Mammary epithelial cell (primary cell): ENCODE measurements at regions of chr5 and their contacts with region 1.

Region 1: GRCh38 chr5:130109152-130109551 is 204.9 kb downstream of the CHSY3 start:
- DNase-seq: peak; percentile 30
- H3K4me3 ChIP-seq: no peak overlapping the region
- H3K27ac ChIP-seq: no peak overlapping the region
- H3K4me1 ChIP-seq: no peaks in the 10 kb centered on the region
- H3K27me3 ChIP-seq: no peaks in the 10 kb centered on the region
- CTCF ChIP-seq: peak; percentile 48 to 70

Region 2: GRCh38 chr5:130141659-130142320 is 32.6 kb after region 1 on chr5:
- CTCF ChIA-PET with region 1: no interaction called
- dilution Hi-C with region 1: no loop called
- in situ Hi-C with region 1: no loop called
- intact Hi-C with region 1: loop called (anchors 1 kb)
- DNase-seq: peak; percentile 60
- H3K4me3 ChIP-seq: no peak overlapping the region
- H3K27ac ChIP-seq: no peak overlapping the region
- H3K4me1 ChIP-seq: peaks cover 6% of the 10 kb centered on the region
- H3K27me3 ChIP-seq: no peaks in the 10 kb centered on the region
- CTCF ChIP-seq: peak; percentile 67 to 87

Region 3: DNA sequence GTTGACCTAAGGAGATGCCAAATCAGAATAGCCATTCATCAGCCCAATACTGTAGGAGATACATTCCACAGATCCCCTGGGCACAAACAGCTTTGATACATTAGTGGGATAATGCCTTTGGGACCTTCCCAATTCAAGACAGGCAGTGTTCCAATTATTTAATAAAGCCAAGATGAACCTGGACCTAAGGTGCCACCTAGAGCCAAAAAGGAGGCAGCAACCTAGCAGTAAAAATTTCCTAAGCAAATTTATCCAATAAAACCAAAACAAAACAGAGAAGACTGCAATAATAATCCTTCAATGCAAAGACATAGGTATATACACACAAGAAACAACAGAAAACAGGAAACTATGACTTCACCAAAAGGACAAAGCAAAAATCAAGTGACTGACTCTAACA is 802.9 kb after region 1 on chr5:
- CTCF ChIA-PET with region 1: no interaction called
- dilution Hi-C with region 1: no loop called
- in situ Hi-C with region 1: no loop called
- intact Hi-C with region 1: loop called (anchors 1 kb)
- DNase-seq: peak; percentile 6
- H3K4me3 ChIP-seq: no peak overlapping the region
- H3K27ac ChIP-seq: no peak overlapping the region
- H3K4me1 ChIP-seq: no peaks in the 10 kb centered on the region
- H3K27me3 ChIP-seq: peaks cover 2% of the 10 kb centered on the region
- CTCF ChIP-seq: peak; percentile 36 to 55